Transverse colon (tissue), 4 donors: ENCODE measurements at regions of chr4 and their contacts with region 1.

Region 1: DNA sequence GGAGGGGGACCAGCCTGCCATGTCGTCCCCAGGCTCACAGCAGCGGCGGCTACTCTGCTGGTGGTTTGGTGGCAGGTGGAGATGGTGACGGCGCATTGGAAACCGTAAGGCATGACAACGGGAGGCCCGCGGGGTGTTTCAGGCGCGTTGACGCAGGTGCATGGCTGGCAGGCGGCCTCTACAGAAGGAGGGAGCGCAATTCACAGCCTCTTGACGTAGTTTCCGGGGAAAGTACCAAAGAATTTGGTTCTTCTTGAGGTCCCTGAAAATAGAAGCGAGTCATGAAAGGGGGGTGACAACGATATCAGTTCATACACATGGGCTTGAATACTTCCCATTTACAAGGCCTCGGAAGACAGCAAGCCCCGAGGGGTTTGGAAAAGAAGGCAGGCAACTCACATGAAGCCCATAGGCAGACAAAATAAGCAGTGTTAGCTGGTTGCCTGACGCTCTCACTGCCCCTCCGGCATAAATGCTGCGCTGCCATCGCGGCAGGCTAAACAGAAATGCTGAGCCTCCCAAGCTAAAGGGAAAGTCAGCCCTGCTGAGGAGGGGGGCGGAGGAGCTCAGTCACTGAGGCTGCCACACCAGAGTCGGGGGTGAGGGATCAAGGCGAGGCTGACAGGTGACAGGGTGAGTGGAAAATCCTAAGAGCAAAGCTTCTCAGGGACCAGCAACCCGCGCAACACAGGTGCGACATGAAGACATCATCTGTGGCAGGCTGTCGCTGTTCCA is 52.3 kb upstream of the PDLIM3 start:
- DNase-seq: peak; percentile 80
- H3K4me3 ChIP-seq: no peak overlapping the region
- H3K27ac ChIP-seq: peak overlapping the region in 3 of 4 donors; percentile 17 to 53 (median 26)
- H3K4me1 ChIP-seq: peaks cover 0 to 9% (median 3%) of the 10 kb centered on the region in 4 donors
- H3K27me3 ChIP-seq: no peaks in the 10 kb centered on the region
- CTCF ChIP-seq: no peak
- EP300 ChIP-seq: no peak
- POLR2A ChIP-seq: no peak

Region 2: DNA sequence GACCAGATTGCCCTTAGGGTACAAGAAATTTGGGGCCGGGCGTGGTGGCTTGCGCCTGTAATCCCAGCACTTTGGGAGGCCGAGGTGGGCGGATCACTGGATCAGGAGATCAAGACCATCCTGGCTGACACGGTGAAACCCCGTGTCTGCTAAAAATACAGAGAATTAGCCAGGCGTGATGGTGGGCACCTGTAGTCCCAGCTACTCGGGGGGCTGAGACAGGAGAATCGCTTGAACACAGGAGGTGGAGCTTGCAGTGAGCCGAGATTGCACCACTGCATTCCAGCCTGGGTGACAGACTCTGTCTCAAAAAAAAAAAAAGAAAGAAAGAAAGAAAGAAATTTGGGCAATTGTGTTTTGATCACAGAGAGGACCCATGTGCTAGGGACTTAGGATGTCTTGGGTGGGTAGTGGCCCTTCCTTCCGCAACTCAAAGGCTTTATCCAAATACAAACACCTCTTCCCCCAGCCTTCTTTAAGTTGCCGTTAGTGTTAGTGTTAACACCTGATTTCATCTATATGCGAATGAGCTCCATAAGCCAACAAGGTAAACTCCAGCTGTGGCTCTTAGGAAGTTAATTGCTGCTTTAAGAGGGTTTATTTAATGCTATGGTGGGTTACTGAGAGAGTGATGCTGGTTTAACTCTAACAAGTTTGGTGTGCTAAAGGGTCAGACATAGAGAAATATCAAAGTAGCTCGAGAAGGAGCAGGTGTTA is 107.4 kb before region 1 on chr4:
- in situ Hi-C with region 1: loop called in 2 of 4 experiments (anchors 10 kb)
- intact Hi-C with region 1: no loop called
- DNase-seq: no peak
- H3K4me3 ChIP-seq: no peak overlapping the region
- H3K27ac ChIP-seq: peak overlapping the region in 2 of 4 donors; percentile 16 to 32
- H3K4me1 ChIP-seq: no peaks in the 10 kb centered on the region
- H3K27me3 ChIP-seq: peaks cover 7% of the 10 kb centered on the region
- CTCF ChIP-seq: no peak
- EP300 ChIP-seq: no peak
- POLR2A ChIP-seq: no peak

Region 3: DNA sequence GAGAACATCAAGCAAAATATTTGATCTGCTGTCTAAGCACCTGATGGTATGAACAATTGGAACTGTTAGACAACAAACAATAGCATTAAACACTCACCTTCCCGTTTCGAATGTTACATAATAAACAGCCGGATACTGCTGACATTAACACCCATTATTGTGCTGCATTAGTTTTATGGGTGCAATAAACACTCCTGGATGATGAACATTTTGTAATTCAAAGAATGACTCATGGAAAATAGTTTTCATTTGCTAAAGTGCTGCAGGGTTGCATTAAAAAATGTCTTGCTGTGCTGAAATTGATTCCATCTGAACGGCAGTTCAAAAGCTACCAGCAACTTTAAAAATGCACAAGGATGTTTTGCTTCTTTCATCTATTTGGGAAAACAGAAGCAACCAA is 325.2 kb after region 1 on chr4:
- in situ Hi-C with region 1: no loop called
- intact Hi-C with region 1: no loop called
- DNase-seq: no peak
- H3K4me3 ChIP-seq: no peak overlapping the region
- H3K27ac ChIP-seq: peak overlapping the region in 1 of 4 donors; percentile 3
- H3K4me1 ChIP-seq: peaks cover 0 to 9% (median 8%) of the 10 kb centered on the region in 4 donors
- H3K27me3 ChIP-seq: no peaks in the 10 kb centered on the region
- CTCF ChIP-seq: no peak
- EP300 ChIP-seq: no peak
- POLR2A ChIP-seq: no peak